Ascending aorta (tissue), 2 donors: ENCODE measurements at regions of chr11 and their contacts with region 1.

Region 1: GRCh38 chr11:13276832-13277767 is 490 bp upstream of the BMAL1 start:
- DNase-seq: peak; percentile 95 to 99
- H3K4me3 ChIP-seq: peak overlapping the region; percentile 86 to 90
- H3K27ac ChIP-seq: peak overlapping the region; percentile 93 to 96
- H3K4me1 ChIP-seq: peaks cover 3 to 14% of the 10 kb centered on the region in 2 donors
- H3K27me3 ChIP-seq: no peaks in the 10 kb centered on the region
- CTCF ChIP-seq: no peak

Region 2: GRCh38 chr11:12680246-12680939 is 596.7 kb before region 1 on chr11:
- intact Hi-C with region 1: loop called (anchors 10 kb)
- DNase-seq: peak; percentile 43 to 86
- H3K4me3 ChIP-seq: peak overlapping the region; percentile 9 to 15
- H3K27ac ChIP-seq: peak overlapping the region; percentile 2 to 52
- H3K4me1 ChIP-seq: peaks cover 2 to 18% of the 10 kb centered on the region in 2 donors
- H3K27me3 ChIP-seq: no peaks in the 10 kb centered on the region
- CTCF ChIP-seq: no peak

Region 3: GRCh38 chr11:12818333-12819015 is 458.6 kb before region 1 on chr11:
- intact Hi-C with region 1: no loop called
- DNase-seq: no peak
- H3K4me3 ChIP-seq: no peak overlapping the region
- H3K27ac ChIP-seq: peak overlapping the region; percentile 7 to 11
- H3K4me1 ChIP-seq: peaks cover 0 to 13% of the 10 kb centered on the region in 2 donors
- H3K27me3 ChIP-seq: no peaks in the 10 kb centered on the region
- CTCF ChIP-seq: no peak

Region 4: DNA sequence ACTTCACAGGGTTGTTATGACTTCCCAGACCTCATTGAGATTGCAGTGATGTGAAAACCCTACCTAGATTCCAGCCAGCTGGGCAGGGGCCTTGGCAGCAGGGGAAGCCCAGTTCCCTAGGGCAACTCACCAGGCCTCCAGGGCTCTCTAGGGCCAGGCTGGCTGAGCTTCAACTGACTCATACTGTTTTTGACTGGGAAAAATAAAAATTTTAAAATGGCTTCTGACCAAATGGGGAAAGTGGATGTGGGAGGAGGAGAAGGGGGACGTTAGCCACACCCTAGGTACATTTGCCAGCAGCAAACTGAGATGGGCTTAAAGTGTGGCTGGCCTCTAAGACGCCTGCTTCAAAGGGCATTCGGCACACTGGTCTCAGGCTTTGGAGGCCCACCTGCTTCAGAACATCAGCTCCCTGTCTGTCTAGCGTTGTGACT is 39.4 kb after region 1 on chr11:
- intact Hi-C with region 1: loop called (anchors 5 kb)
- DNase-seq: peak in 1 of 2 donors; percentile 87
- H3K4me3 ChIP-seq: no peak overlapping the region
- H3K27ac ChIP-seq: peak overlapping the region; percentile 57 to 64
- H3K4me1 ChIP-seq: peaks cover 5 to 35% of the 10 kb centered on the region in 2 donors
- H3K27me3 ChIP-seq: no peaks in the 10 kb centered on the region
- CTCF ChIP-seq: no peak

Region 5: DNA sequence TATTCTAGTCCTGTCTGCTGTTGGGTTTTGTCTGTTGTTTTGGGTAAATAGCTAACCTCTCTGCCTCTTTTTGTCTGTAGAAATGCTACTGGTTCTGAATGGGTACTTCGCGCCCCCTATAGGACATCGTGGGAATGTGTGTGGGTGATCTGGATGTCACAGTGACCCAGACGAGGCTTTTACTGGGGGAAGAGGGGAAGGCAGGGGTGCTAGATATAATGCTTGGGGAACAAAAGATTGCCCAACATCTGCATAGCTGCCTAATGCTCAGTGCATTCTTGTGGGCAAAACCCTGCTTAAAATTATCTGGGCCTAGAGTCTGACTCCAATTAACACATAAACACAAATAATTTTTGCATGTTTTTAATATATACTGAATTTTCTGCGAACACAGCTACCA is 58.2 kb after region 1 on chr11:
- intact Hi-C with region 1: loop called (anchors 2 kb)
- DNase-seq: peak in 1 of 2 donors; percentile 82
- H3K4me3 ChIP-seq: no peak overlapping the region
- H3K27ac ChIP-seq: no peak overlapping the region
- H3K4me1 ChIP-seq: peaks cover 2 to 19% of the 10 kb centered on the region in 2 donors
- H3K27me3 ChIP-seq: no peaks in the 10 kb centered on the region
- CTCF ChIP-seq: peak; percentile 56 to 84 (median 72)

Region 6: GRCh38 chr11:13668102-13668956 is 391.2 kb after region 1 on chr11 and contains the start of gene FAR1:
- intact Hi-C with region 1: loop called (anchors 1 kb)
- DNase-seq: peak; percentile 96 to 99
- H3K4me3 ChIP-seq: peak within 1 kb of the TSS; percentile 92 to 95
- H3K27ac ChIP-seq: peak within 1 kb of the TSS; percentile 79 to 84
- H3K4me1 ChIP-seq: peaks cover 0 to 3% of the 10 kb centered on the region in 2 donors
- H3K27me3 ChIP-seq: no peaks in the 10 kb centered on the region
- CTCF ChIP-seq: peak; percentile 61 to 64 (median 62)
- total RNA-seq, gene FAR1: 66.0 TPM